ENCODE measurements at regions of chr5 and their contacts with region 1.

Region 1: DNA sequence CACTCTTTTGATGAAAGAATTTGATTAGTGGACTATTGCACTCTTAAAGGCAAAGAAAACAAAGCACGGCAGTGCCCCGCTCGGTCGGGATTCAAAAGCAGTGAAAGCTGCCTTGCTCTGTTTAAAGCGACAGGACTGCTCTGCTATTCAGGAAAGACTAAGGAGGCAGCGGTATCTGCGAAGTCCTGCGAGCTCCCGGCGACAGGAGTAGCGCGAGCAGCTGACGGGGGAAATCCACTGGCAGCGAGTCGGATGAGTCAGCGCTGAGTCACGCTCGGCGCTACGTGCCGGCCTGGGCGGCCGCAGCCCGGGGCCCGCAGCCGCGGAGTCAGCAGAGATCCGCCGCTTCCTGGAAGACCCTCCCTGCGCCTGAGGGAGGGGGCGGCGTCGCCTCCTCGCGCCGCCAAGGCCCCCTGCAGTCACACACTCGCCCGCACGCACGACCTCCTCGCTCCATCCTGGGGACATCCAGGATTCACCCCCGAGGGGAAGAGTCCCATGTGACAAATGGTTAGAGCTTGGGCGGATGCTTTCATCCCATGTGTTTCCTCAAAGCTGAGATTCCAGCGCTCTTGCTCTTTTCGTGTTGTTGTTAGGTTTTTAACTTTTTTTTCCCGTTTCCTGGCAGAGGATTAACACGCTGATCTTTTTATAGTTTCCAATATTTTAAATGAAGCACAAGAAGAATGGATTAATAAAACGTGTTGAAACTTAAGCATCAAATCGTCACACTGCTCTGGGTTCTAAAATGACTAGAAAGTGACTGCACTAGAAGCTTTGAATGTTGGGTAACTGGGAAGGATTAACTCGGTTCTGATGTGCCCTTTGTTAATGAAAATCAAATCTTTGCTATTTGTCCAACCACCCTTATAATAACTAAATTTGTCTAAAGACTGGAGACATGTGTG is 102.5 kb downstream of the ARRDC3 start:
- DNase-seq: peak; percentile 95
- H3K4me3 Mint-ChIP-seq: peak overlapping the region; percentile 84
- H3K27ac Mint-ChIP-seq: peak overlapping the region; percentile 99
- H3K4me1 Mint-ChIP-seq: peaks cover 51% of the 10 kb centered on the region
- H3K27me3 Mint-ChIP-seq: no peaks in the 10 kb centered on the region

Region 2: DNA sequence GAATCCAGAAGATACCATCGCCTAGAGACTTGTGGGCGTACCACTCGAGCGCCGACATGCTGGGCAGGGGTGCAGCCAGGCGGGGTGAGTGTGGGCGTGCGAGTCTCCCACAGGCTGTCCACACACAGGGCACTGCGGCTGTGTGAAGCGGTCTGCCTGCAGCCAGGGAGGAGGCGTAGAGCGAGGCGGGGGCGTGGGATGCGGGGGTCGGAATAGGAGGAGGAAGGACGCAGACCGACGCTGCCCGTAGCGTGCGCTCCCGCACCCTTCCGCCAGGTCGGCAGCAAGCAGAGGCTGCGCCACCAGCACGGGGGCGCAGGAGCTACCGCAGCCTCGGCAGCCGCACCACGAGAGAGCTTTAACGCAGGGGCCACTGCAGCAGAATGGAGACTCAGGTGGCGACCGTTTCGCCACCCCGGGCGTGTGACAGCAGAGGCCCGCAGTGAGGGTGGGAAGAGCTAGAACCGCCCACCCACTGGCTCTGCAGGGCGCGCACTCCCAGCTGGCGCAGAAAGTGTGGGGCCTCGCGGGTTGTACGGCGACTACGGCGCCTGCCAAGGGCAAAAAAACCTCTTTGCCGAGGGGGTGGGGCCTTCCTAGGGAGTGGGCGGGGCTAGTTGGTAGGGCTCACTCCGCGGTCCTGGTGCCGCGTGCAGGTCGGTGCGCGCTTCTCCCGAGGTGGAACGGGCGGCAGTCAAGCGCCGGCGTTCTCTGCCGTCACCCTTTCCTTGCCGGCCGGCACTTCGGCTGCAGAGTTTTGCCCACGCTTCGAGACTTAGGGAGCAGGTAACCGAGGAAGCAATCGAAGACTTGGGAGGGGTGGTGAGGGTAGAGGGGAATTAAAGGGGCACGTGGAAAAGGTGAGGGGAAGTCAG is 806.1 kb before region 1 on chr5 and contains the starts of genes MBLAC2 and POLR3G:
- CTCF ChIA-PET with region 1: no interaction called
- POLR2A ChIA-PET with region 1: no interaction called
- intact Hi-C with region 1: loop called (anchors 2 kb)
- DNase-seq: peak; percentile 96
- H3K4me3 Mint-ChIP-seq: peak within 1 kb of the TSS; percentile 92
- H3K27ac Mint-ChIP-seq: peak within 1 kb of the TSS; percentile 88
- H3K4me1 Mint-ChIP-seq: peaks cover 23% of the 10 kb centered on the region
- H3K27me3 Mint-ChIP-seq: no peaks in the 10 kb centered on the region
- total RNA-seq, gene MBLAC2: 3.3 to 3.5 TPM
- total RNA-seq, gene POLR3G: 9.6 to 9.7 TPM

Region 3: DNA sequence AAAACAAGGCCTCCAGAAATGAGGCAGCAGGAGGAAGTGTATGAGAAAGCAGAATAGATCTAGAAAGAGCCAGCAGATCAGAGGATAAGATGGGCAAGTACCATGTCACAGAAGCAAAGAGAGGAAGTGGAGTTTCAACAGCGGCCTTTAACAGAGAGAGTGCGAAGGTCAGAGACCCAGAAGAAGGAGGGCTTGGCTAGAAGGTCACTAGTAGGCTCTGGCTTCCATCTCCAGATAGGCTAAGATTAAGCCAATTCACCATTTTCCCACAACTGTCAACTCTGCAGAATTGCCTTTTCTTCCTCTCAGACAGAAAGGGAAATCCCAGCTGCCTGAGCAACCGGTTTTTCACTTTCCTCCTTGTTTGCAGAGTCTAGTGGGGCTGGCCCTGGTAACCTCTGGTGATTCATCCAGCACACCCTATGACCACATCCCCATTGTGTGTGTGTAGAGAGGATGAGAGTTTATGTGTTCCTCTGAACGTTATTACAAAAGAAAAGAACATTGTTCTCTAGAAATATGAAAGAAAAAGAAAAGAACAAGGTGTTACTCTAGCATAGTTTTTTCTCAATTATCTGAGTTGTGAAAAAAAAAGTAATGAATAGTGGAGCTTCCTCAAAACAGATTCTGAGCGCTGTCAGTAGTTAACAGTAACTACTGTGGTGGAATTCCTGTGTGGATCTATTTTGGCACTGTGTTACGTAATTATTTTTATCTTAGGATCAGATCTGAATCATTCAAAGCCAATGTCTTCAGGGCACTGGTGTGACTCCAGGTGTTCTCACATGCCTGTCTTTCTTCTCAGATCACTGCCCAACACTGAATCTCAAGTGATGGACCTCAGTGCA is 117.9 kb before region 1 on chr5:
- CTCF ChIA-PET with region 1: no interaction called
- POLR2A ChIA-PET with region 1: interaction called, 3 read pairs
- intact Hi-C with region 1: loop called (anchors 1 kb)
- DNase-seq: peak; percentile 86
- H3K4me3 Mint-ChIP-seq: no peak overlapping the region
- H3K27ac Mint-ChIP-seq: peak overlapping the region; percentile 67
- H3K4me1 Mint-ChIP-seq: peaks cover 19% of the 10 kb centered on the region
- H3K27me3 Mint-ChIP-seq: no peaks in the 10 kb centered on the region

Region 4: DNA sequence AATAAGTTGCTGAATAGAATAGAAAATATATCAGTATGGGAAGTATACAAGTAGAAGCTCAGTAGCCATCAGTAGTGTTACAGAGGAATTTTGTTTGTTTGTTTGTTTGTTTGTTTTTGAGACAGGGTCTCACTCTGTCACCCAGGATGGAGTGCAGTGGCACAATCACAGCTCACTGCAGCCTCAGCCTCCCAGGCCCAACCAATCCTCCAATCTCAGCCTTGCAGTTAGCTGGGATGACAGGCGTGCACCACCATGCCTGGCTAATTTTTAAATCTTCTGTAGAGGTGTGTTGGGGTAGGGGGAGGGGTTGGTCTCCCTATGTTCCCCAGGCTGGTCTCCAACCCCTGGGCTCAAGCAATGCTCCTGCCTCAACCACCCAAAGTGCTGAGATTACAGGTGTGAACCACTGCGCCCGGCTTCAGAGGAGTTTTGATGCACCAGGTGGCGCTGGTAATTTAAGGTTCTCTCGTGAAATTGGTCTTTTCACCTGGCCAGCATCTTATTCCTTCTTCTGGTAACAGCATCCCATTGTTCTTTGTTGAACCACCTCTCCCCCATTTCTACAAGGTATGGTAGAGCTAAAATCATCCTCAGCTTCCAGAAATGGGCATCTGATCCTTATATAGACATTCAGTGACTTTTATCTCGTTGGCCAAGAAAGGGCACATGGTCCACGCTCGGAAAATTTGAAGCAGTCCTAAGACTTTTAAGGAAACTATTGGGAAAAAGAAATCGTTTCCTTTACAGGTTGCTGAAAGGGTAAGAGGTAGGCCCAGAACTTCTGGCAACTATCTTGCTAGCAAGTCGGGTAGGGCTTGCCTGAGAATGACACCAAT is 54.5 kb before region 1 on chr5:
- CTCF ChIA-PET with region 1: interaction called, 3 read pairs
- POLR2A ChIA-PET with region 1: no interaction called
- intact Hi-C with region 1: loop called (anchors 5 kb)
- DNase-seq: peak; percentile 73
- H3K4me3 Mint-ChIP-seq: no peak overlapping the region
- H3K27ac Mint-ChIP-seq: peak overlapping the region; percentile 13
- H3K4me1 Mint-ChIP-seq: peaks cover 4% of the 10 kb centered on the region
- H3K27me3 Mint-ChIP-seq: peaks cover 7% of the 10 kb centered on the region

Region 5: DNA sequence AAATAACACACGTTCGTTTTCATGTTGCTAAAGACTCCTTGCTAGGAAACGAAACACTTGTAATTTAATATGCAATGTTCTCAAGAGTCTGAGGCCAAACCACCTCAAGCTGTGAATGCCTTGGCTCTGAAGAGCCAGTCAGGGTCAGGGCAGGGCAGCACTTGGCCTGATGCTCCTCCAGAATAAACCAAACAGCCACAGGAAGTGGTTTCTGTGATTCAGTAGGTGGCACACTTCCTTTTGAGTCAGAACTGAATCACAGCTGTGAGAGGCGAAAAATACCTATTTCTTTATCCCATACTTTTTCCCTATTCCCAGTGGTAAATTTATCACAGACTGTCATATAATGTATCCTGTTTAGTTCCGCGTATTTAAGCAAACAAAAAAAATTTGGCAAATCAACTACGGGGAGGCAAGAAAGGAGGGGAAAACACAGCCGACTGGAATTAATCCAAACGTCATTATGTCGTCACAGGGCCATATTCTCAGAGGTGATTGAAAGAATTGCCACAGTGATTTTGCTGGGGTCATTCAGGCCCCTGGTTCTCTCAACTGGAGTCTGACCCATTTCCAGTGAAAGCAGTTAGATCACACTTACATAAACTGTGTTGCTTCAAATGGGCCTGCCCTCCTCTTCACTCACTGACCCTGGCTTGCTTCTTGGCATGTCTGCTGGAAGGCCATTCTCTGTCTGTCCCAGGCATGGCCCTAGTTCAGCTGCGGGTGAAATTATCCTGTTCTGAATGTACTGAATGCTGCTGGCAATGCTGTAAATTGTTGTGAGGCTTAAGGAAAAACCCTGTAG is 31.3 kb after region 1 on chr5:
- CTCF ChIA-PET with region 1: interaction called, 15 read pairs
- POLR2A ChIA-PET with region 1: interaction called, 49 read pairs
- intact Hi-C with region 1: loop called (anchors 1 kb)
- DNase-seq: peak; percentile 82
- H3K4me3 Mint-ChIP-seq: peak overlapping the region; percentile 61
- H3K27ac Mint-ChIP-seq: peak overlapping the region; percentile 95
- H3K4me1 Mint-ChIP-seq: peaks cover 45% of the 10 kb centered on the region
- H3K27me3 Mint-ChIP-seq: no peaks in the 10 kb centered on the region

Region 6: DNA sequence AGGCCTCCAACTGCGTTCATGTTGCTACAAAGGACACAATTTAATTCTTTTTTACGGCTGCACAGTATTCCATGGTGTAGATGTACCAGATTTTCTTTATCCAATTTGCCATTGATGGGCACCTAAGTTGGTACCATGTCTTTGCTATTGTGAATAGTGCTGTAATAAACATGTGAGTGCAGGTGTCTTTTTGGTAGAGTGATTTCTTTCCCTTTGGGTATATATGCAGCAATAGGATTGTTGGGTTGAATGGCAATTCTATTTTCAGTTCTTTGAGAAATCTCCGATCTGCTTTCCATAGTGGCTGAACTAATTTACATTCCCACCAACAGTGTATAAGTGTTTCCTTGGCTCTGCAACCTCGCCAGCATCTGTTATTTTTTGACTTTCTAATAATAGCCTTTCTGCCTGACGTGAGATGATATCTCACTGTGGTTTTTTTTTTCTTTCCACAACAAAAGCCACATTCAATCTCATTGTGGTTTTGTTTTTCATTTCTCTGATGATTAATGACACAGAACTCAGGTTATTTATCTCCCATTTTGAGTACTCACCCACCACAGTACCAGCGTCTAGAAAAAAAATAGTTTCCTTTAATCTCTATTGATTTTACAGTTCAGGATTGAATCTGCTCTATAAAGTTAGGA is 80.6 kb after region 1 on chr5:
- CTCF ChIA-PET with region 1: no interaction called
- POLR2A ChIA-PET with region 1: no interaction called
- intact Hi-C with region 1: loop called (anchors 1 kb)
- DNase-seq: no peak
- H3K4me3 Mint-ChIP-seq: peak overlapping the region; percentile 2
- H3K27ac Mint-ChIP-seq: peak overlapping the region; percentile 56
- H3K4me1 Mint-ChIP-seq: peaks cover 12% of the 10 kb centered on the region
- H3K27me3 Mint-ChIP-seq: peaks cover 15% of the 10 kb centered on the region

Region 7: GRCh38 chr5:93151121-93151520 is 1870.5 kb after region 1 on chr5:
- CTCF ChIA-PET with region 1: no interaction called
- POLR2A ChIA-PET with region 1: no interaction called
- intact Hi-C with region 1: no loop called
- DNase-seq: no peak
- H3K4me3 Mint-ChIP-seq: no peak overlapping the region
- H3K27ac Mint-ChIP-seq: no peak overlapping the region
- H3K4me1 Mint-ChIP-seq: no peaks in the 10 kb centered on the region
- H3K27me3 Mint-ChIP-seq: no peaks in the 10 kb centered on the region